Posterior vena cava (tissue), 2 donors: ENCODE measurements at regions of chr6 and their contacts with region 1.

Region 1: GRCh38 chr6:35173427-35174087 is 32.4 kb upstream of the TCP11 start:
- DNase-seq: no peak

Region 2: GRCh38 chr6:34709386-34709785 is 464.2 kb before region 1 on chr6:
- intact Hi-C with region 1: loop called in 1 of 2 experiments (anchors 5 kb)
- DNase-seq: peak; percentile 81

Region 3: DNA sequence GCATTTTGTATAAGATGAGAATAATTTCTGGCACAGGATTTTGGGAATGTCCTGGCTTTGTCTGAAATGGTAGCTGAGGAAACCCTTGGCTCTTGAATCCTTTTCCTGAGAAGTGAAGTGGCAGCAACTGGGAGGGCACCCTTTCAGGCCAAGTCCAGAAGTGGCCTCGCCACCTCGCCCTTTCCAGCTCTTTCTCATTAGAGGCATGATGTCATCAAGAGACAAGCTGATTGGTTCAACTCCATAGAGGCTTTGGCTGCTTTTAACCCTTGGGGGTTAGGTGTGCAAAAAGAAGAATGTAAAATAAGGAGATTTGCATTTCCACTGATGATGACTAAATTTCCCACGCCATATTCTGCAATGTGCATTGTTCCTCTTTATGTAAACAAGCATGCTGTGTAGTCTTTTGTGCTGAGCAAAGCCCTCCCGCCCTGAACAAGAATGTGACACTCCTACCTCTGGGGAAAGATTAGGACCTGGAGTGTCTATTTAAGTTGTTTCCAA is 149.0 kb before region 1 on chr6:
- intact Hi-C with region 1: no loop called
- DNase-seq: no peak